ENCODE measurements at regions of chr10 and their contacts with region 1.

Region 1: DNA sequence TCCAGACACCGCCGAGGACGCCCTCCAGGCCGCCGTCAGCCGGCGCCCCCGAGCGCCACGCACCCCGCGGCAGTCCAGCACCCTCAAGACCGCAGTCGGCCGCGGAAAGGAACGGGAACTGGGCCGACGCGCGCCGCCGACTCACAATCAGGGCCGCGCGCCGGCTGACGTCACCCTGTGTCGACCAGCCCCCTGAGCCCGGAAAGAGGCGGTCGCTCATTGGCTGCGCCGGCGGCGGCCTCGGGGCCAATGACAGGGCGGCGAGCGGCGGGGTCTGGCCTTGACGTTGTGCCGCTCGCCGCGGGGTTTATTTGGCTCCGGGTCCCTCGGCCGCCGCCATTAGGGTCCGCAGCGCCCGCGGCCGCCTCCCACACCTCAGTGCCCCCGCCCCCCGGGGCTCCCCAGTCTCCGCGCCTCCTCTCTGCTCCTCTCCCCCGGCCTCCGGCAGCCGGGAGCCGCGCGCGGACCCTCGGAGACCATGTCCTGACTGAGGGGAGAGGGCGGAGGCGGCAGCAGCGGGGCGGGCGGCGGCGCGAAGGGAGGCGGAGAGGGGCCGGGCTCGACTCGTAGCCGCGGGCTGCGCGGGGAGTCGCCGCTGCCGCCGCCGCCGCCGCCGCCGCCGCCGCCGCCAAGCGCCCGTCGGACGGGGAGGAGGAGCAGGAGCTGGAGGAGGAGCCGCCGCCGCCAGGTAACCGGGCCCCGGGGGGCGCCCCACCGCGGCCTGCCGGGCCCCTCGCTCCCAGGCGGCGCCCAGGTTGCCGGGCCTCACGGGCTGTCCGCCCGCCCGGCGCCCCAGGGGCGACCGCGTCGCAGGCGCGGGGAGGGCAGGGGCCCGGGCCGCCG is 25.1 kb upstream of the ZRANB1 start:
- DNase-seq: peak; percentile 97
- H3K4me3 ChIP-seq: peak overlapping the region; percentile 92
- H3K27ac ChIP-seq: peak overlapping the region; percentile 63
- H3K4me1 ChIP-seq: peaks cover 19% of the 10 kb centered on the region
- CTCF ChIP-seq: no peak

Region 2: DNA sequence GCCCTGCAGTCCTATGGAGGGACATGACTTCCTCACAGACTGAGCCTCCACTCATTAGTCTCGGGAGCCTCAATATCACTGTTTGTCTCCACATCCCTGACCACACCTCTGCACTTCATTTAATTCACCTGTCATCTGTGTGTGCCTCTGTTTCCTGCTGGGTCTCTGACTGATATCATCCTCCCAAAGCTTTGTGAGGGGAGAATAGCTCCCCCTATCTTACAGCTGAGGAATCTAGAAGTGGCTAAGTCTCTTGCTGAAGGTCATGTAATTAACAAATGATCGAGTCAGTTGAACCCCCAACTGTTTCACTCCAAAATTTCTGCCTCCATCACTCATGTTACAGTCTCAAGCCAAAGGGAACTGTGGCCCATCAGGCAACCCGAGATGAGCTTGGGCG is 1019.7 kb before region 1 on chr10:
- CTCF ChIA-PET with region 1: no interaction called
- POLR2A ChIA-PET with region 1: no interaction called
- intact Hi-C with region 1: no loop called
- DNase-seq: peak; percentile 10
- H3K4me3 ChIP-seq: no peak overlapping the region
- H3K27ac ChIP-seq: no peak overlapping the region
- H3K4me1 ChIP-seq: no peaks in the 10 kb centered on the region
- CTCF ChIP-seq: peak; percentile 65

Region 3: DNA sequence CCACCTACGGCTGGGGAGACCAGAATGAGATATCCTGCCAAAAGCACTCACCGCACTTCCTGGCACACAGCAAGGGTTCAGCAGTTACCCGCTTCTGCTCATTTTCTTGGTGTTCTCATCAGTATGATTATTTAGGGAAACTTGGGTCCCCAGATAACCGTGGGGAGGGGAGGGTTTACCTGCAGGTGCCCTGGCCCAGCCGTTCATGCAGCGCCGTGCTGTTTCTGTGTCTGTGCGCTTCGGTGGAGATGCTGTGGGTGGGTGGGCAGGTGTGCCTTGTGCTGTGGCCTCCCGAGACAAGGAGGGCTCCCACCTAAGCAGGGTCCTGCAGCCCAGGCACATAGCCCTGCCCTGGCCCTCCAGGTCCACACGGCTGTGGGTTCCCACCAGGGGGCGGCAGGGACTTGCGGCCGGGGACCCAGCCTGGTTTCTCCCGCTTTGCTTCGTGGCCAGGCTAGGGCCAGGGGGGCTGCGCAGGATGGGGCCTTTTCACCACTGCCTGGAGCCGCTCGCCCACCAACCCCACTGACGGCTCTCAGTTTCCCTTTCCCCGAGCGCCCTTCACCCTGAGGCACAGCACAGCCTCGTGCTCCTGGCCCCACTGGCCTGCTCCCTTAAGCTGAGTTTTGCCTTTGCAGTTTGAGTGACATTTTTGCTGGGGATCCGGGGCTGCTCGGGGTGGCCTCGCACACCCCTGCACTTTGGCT is 376.7 kb before region 1 on chr10:
- CTCF ChIA-PET with region 1: no interaction called
- POLR2A ChIA-PET with region 1: no interaction called
- intact Hi-C with region 1: loop called (anchors 5 kb)
- DNase-seq: peak; percentile 96
- H3K4me3 ChIP-seq: peak overlapping the region; percentile 36
- H3K27ac ChIP-seq: peak overlapping the region; percentile 98
- H3K4me1 ChIP-seq: peaks cover 100% of the 10 kb centered on the region
- CTCF ChIP-seq: peak; percentile 71

Region 4: GRCh38 chr10:124802313-124802675 is 114.5 kb before region 1 on chr10:
- CTCF ChIA-PET with region 1: no interaction called
- POLR2A ChIA-PET with region 1: interaction called, 3 read pairs
- intact Hi-C with region 1: loop called (anchors 5 kb)
- DNase-seq: peak; percentile 51
- H3K4me3 ChIP-seq: peak overlapping the region; percentile 84
- H3K27ac ChIP-seq: peak overlapping the region; percentile 64
- H3K4me1 ChIP-seq: peaks cover 10% of the 10 kb centered on the region
- CTCF ChIP-seq: no peak

Region 5: DNA sequence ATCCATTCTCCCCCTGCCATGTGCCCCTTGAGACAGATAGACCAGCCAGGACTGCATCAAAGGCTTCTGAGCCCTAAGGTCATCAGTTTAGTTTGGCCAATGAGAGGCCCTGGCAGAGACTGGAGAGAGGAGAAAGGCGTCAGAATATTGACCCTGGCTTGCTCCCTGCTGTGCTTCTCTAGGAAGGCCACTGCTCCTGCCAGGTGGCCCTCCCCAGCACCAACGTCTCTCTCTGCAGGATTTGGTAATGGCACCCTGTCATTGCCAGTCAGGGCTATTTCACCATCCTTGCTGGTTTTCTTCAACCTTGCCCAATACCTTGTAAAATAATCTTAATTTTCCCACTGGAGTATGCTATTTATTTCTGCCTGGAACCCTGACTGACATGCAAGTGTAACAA is 13.7 kb before region 1 on chr10:
- CTCF ChIA-PET with region 1: no interaction called
- POLR2A ChIA-PET with region 1: interaction called, 10 read pairs
- intact Hi-C with region 1: no loop called
- DNase-seq: no peak
- H3K4me3 ChIP-seq: no peak overlapping the region
- H3K27ac ChIP-seq: no peak overlapping the region
- H3K4me1 ChIP-seq: no peaks in the 10 kb centered on the region
- CTCF ChIP-seq: no peak

Region 6: GRCh38 chr10:124992462-124993344 is 75.9 kb after region 1 on chr10:
- CTCF ChIA-PET with region 1: no interaction called
- POLR2A ChIA-PET with region 1: interaction called, 5 read pairs
- intact Hi-C with region 1: loop called (anchors 5 kb)
- DNase-seq: peak; percentile 65
- H3K4me3 ChIP-seq: no peak overlapping the region
- H3K27ac ChIP-seq: no peak overlapping the region
- H3K4me1 ChIP-seq: peaks cover 28% of the 10 kb centered on the region
- CTCF ChIP-seq: peak; percentile 79

Region 7: DNA sequence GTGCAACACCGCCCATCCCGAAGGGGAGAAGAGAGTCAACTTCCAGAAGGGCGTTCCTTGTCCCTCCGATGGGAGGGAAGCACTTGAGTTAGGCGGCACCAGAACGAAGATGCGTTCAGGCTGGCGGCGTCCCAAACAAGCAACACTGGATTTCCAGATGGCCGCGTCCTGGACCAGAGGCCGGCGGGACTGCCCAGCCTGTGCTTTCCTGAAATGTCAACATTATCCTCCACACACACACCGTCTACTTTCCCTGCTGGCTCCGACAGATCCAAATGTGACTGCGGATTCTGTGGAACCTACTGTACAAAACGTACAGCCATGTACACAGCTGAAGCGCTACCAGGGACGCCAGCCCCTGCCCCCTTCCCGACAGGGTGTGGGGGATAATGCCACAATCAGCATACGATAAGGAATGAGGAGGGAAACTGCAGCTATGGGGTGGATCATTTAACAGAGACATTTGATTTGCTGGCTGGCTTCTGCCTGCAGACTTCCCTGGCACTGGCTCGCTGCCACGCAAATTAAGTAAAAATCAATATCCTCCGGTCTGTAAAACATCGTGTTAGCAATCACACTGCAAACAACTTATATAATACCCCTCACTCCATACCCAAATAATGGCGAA is 107.2 kb after region 1 on chr10:
- CTCF ChIA-PET with region 1: no interaction called
- POLR2A ChIA-PET with region 1: no interaction called
- intact Hi-C with region 1: no loop called
- DNase-seq: no peak
- H3K4me3 ChIP-seq: peak overlapping the region; percentile 12
- H3K27ac ChIP-seq: no peak overlapping the region
- H3K4me1 ChIP-seq: peaks cover 18% of the 10 kb centered on the region
- CTCF ChIP-seq: no peak

Region 8: DNA sequence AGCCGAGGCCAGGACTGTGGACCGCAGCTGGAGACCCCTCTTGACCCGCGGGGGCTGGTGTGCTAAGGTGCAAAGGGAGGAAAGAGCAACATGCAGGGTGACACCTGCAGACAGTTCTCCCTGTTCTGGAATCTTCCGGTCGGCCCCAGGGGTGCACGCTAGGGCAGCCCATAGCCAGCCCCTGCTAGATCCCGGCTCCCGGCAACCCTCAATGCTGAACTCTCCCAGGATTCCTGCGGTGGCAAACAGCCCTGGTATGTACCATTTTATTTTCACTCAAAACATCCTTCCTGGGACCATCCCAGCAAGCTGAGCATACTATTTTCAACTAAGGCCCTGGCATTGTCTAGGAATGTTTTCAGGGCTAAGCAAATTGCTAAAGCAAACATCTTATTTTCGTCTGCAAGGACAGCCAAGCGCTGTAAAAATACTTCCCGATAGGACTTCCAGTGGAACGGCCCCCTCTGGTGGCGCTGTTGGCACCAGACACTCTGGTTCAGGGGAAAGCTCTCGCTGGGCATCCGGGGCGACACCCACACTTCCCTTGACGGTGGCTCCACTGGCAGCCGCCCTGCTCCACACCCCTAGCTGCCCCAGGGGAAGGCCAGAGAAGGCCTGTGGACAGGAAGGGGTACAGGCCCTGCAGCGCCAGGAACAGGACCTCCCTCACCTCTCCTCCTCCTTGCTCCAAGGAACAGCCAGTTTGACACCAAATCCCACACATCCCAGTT is 144.2 kb after region 1 on chr10:
- CTCF ChIA-PET with region 1: no interaction called
- POLR2A ChIA-PET with region 1: no interaction called
- intact Hi-C with region 1: loop called (anchors 1 kb)
- DNase-seq: peak; percentile 73
- H3K4me3 ChIP-seq: peak overlapping the region; percentile 37
- H3K27ac ChIP-seq: peak overlapping the region; percentile 8
- H3K4me1 ChIP-seq: peaks cover 61% of the 10 kb centered on the region
- CTCF ChIP-seq: peak; percentile 89